Activated T-helper 1 cell treated with anti-CD3 and anti-CD28 coated beads, Interleukin-12 subunit alpha, Interleukin-12 subunit beta, Interleukin-2, Interleukin-4 antibody, amounts not matched to agents 30 ng/mL and 10 ng/mL and 1 ng/mL, durations not matched to agents 14 hours and 24 hours and 36 hours (primary cell): ENCODE measurements at regions of chr1 and their contacts with region 1.

Region 1: GRCh38 chr1:8477166-8477982 is 159.5 kb downstream of the SLC45A1 start:
- DNase-seq: no peak
- H3K4me3 Mint-ChIP-seq: peak overlapping the region; percentile 1
- H3K27ac Mint-ChIP-seq: peak overlapping the region; percentile 80
- H3K4me1 Mint-ChIP-seq: peaks cover 60% of the 10 kb centered on the region
- H3K27me3 Mint-ChIP-seq: no peaks in the 10 kb centered on the region

Region 2: DNA sequence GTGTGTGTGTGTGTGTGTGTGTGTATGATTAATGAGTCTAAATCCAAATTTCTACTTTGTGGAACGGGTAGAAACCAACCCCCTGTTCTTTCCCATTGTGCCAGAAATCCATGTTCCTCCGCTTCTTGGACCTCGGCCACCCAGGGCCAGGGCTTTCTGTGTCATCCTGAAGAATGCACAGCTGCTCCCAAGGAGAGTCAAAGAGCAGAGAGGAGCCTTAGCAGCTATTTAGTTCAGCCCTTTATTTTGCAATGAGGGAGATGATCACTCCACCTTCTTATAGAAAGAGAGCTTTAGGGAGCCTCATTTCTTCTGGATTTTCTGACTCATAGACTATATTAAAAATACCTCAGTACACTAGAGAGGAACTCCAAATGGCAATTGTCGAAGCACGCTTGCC is 1195.6 kb before region 1 on chr1:
- intact Hi-C with region 1: no loop called
- DNase-seq: no peak
- H3K4me3 Mint-ChIP-seq: no peak overlapping the region
- H3K27ac Mint-ChIP-seq: no peak overlapping the region
- H3K4me1 Mint-ChIP-seq: no peaks in the 10 kb centered on the region
- H3K27me3 Mint-ChIP-seq: no peaks in the 10 kb centered on the region

Region 3: DNA sequence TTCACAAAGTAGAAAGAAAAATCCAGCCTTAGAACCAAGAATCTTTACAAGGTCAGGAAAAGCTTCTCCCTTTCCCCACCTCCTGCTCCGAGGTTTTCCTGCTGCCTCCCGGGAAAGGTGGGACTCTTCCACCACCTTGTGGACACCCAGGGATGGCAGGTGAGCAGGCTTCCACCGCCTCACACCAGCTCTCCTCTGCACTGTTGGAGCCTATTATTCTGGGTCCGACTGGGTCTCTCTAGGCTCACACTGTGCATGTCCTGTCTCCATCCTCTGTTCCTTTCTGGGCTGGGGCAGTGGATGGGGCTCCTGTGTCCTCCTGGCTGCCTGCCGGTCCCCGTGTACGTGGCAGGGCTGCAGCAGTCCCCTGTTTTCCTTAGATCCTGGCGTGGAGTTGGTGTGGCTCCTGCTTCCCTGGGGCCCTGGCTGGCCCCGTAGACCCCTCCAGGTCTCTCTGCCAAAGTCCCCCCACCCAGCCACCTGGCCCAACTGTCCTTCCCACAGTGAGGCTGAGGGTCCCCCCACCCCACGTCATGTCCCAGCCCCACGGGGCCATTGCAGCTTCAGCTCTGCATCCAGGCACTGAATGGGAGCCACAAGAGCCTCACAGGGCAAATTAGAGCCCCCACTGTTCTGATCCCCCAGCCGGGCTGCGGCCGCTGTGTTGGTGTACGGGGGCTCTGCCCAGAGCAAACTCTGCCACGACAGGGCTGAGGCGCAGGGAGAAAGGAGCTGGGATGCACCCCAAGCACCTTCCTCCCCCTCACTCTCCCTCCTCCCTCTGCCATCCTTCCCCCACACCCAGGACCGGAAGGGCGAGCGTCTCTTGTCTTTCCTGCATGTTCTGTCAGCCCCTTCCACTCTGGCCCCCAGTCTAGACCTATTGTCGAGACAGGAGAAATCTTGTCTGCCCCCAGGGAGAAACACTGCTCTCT is 162.8 kb before region 1 on chr1:
- intact Hi-C with region 1: no loop called
- DNase-seq: no peak
- H3K4me3 Mint-ChIP-seq: no peak overlapping the region
- H3K27ac Mint-ChIP-seq: no peak overlapping the region
- H3K4me1 Mint-ChIP-seq: peaks cover 18% of the 10 kb centered on the region
- H3K27me3 Mint-ChIP-seq: peaks cover 44% of the 10 kb centered on the region

Region 4: GRCh38 chr1:8431019-8431418 is 46.4 kb before region 1 on chr1:
- intact Hi-C with region 1: loop called (anchors 2 kb)
- DNase-seq: peak; percentile 16
- H3K4me3 Mint-ChIP-seq: peak overlapping the region; percentile 20
- H3K27ac Mint-ChIP-seq: peak overlapping the region; percentile 79
- H3K4me1 Mint-ChIP-seq: peaks cover 59% of the 10 kb centered on the region
- H3K27me3 Mint-ChIP-seq: no peaks in the 10 kb centered on the region

Region 5: DNA sequence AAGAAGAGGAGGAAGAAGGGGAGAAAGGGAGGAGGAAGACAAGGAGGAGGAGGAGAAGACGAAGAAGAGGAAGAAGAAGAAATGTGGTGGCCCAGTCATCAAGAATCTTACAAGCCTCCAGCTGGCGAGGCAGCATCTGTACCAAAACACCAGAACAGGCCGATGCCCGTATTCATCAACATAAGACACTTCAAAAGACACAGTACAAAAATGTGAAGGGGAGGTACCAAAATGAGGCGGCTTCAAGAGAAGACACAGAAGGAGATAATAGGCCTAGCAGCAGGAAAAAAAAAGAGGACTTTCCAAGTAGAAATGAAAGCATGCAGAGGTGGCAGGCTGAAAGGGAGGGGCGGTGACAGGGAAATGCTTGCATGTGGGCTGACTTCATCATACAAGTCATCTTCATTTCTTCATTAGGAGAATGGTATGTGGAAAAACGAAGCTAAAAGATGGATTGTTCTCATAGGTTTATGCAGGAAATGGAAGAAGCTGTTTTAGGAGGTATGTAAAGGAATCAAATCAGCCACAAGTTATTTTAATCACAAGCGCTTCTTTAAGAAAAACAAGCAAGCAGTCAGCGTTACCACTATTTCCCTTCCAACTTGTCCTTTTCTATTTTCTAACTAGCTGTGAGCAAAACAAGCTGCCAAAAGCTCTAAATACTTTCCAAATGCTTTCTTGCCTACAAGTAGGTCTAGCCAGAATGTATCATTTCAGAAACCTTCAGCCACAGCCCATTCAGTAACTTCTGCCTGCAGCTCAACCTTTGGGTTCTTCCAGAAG is 32.9 kb after region 1 on chr1:
- intact Hi-C with region 1: loop called (anchors 2 kb)
- DNase-seq: peak; percentile 47
- H3K4me3 Mint-ChIP-seq: peak overlapping the region; percentile 54
- H3K27ac Mint-ChIP-seq: peak overlapping the region; percentile 88
- H3K4me1 Mint-ChIP-seq: peaks cover 47% of the 10 kb centered on the region
- H3K27me3 Mint-ChIP-seq: no peaks in the 10 kb centered on the region

Region 6: GRCh38 chr1:8540261-8540941 is 63.0 kb after region 1 on chr1:
- intact Hi-C with region 1: loop called (anchors 1 kb)
- DNase-seq: no peak
- H3K4me3 Mint-ChIP-seq: peak overlapping the region; percentile 65
- H3K27ac Mint-ChIP-seq: peak overlapping the region; percentile 91
- H3K4me1 Mint-ChIP-seq: peaks cover 51% of the 10 kb centered on the region
- H3K27me3 Mint-ChIP-seq: no peaks in the 10 kb centered on the region

Region 7: DNA sequence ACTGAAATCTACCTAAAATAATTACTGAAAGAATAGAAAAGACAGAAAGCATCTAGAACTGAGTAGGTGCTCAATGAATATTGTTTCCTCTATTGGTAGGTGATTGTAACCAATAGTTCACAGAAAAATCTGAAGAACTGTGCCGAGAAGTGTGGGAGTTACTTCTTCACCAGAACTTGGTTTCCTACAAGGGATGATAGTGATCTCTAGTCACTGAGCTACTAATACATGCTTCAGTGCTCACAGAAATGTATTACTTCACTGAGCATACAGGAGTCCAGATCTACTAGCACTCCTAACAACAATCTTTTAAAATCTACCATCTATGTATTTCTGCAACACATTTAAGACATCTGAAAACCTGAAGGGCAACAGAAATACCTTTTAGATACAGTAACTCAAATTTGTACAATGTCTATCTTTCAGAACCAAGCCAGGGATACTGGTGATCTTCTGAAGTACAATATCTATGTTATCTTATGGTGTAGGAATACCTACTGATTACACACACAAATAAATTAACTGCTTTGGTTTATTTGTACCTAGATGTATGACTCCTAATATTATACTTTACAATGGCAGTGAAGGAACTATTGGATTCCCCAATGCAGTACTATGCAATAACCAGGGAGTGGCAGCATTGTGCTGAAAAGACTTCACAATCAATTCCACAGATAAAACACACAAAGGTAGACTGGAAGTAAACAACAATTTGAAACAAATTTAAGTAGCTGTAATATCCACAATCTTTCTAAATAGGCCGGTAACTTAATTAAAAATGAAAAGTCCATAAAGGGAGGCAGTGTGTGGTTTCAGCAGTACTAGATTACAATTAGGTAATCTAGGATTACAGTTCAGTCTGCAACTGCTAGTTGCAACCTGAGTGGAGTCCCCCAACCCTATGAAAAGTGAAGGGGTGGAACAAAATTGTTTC is 83.5 kb after region 1 on chr1:
- intact Hi-C with region 1: loop called (anchors 2 kb)
- DNase-seq: no peak
- H3K4me3 Mint-ChIP-seq: peak overlapping the region; percentile 32
- H3K27ac Mint-ChIP-seq: peak overlapping the region; percentile 78
- H3K4me1 Mint-ChIP-seq: peaks cover 57% of the 10 kb centered on the region
- H3K27me3 Mint-ChIP-seq: no peaks in the 10 kb centered on the region

Region 8: DNA sequence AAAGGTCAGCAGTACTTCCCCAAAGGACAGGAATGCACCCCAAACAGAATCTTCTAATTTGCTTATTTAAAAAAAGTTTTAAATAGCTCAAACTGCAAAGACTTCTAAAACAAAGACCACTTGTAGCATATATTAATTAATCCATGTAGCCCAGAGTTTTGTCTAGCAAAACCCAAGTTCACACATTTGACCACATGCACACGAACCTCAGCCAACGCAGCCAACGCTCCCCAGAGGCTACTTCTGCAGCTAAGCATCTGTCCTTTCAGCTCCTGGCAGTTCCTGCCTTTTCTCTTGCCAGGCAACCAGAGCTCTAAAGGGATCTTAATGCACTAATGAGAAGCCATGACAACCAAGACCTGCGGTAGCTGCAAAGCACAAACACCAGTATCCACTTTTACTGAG is 250.4 kb after region 1 on chr1:
- intact Hi-C with region 1: loop called (anchors 5 kb)
- DNase-seq: no peak
- H3K4me3 Mint-ChIP-seq: no peak overlapping the region
- H3K27ac Mint-ChIP-seq: no peak overlapping the region
- H3K4me1 Mint-ChIP-seq: peaks cover 24% of the 10 kb centered on the region
- H3K27me3 Mint-ChIP-seq: no peaks in the 10 kb centered on the region

Region 9: DNA sequence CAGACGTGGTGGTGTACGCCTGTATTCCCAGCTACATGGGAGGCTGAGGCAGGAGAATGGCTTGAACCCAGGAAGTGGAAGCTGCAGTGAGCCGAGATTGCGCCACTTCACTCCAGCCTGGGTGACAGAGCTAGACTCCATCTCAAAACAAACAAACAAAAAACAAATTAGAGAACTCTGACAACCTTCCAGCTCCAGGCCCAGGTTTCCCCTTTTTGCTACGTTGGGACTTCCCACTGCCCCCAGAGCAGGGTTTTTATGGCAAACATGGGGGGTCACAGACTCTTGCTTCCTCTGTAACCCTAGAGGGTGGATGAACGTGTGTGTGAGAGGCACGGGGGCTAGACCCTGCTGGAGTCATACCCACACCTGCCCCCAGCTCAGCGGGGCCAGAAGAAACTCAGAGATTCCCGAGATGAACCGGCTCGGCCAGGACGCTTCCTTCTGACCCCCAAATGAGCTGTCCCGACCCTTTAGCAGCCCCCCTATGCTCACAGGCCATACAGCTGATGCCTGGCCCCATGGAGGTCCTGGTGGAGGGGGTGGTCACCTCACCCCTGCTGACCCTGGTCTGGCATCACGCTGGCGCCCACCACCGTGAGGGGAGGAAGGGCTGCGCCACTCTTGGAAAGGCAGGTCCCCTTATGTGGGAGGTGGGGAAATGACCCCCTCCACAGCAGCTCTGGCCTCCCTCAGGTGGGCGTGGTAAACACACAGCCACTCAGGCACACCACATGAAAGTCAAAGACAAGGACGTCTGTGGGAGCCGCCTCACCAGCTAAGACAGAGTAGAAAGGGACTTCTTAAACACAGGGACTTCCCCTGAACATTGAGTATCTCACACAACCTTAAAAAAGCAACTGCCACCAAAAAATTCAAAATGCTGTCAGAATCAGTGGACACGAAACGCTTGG is 644.4 kb after region 1 on chr1:
- intact Hi-C with region 1: no loop called
- DNase-seq: peak; percentile 40
- H3K4me3 Mint-ChIP-seq: peak overlapping the region; percentile 30
- H3K27ac Mint-ChIP-seq: no peak overlapping the region
- H3K4me1 Mint-ChIP-seq: peaks cover 14% of the 10 kb centered on the region
- H3K27me3 Mint-ChIP-seq: peaks cover 10% of the 10 kb centered on the region